ENCODE measurements at regions of chr12 and their contacts with region 1.

Region 1: DNA sequence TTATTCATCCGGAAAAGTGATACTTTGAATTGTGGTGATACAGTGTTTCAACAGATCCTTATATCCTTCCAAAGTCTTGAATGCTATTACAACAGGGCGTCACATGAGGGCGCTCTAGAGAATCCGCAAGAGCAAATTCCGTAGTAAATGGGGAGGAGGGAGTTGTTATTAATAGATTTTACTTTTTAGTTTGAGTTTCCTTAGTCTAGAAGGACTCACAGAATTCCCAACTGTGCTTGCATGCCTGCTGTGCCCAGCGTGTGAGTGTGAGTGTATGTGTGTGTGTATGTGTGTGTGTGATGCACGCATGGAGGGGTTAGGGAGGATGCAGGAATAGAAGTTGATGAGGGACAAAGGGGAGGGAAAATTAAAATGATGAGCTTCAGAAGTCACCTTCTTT is 375.3 kb downstream of the C12orf75 start:
- DNase-seq: peak in 5 of 10 donors; percentile 38 to 71 (median 48)
- H3K4me3 ChIP-seq: no peak overlapping the region
- H3K27ac ChIP-seq: peak overlapping the region in 29 of 59 donors; percentile 1 to 71 (median 33)
- H3K27me3 ChIP-seq: no peaks in the 10 kb centered on the region
- CTCF ChIP-seq: peak; percentile 56 to 90 (median 80)

Region 2: GRCh38 chr12:105409801-105410471 is 295.8 kb before region 1 on chr12:
- intact Hi-C with region 1: loop called in 1 of 2 experiments (anchors 10 kb)
- DNase-seq: no peak
- H3K4me3 ChIP-seq: peak overlapping the region in 3 of 59 donors; percentile 10 to 35 (median 17)
- H3K27ac ChIP-seq: no peak overlapping the region
- H3K27me3 ChIP-seq: peaks cover 0 to 6% (median 0%) of the 10 kb centered on the region in 45 donors
- CTCF ChIP-seq: no peak

Region 3: GRCh38 chr12:105538880-105539279 is 166.9 kb before region 1 on chr12:
- intact Hi-C with region 1: no loop called
- DNase-seq: no peak
- H3K4me3 ChIP-seq: no peak overlapping the region
- H3K27ac ChIP-seq: no peak overlapping the region
- H3K27me3 ChIP-seq: no peaks in the 10 kb centered on the region
- CTCF ChIP-seq: no peak

Region 4: GRCh38 chr12:105644770-105645169 is 61.0 kb before region 1 on chr12:
- intact Hi-C with region 1: no loop called
- DNase-seq: no peak
- H3K4me3 ChIP-seq: no peak overlapping the region
- H3K27ac ChIP-seq: no peak overlapping the region
- H3K27me3 ChIP-seq: peaks cover 0 to 3% (median 0%) of the 10 kb centered on the region in 45 donors
- CTCF ChIP-seq: no peak

Region 5: DNA sequence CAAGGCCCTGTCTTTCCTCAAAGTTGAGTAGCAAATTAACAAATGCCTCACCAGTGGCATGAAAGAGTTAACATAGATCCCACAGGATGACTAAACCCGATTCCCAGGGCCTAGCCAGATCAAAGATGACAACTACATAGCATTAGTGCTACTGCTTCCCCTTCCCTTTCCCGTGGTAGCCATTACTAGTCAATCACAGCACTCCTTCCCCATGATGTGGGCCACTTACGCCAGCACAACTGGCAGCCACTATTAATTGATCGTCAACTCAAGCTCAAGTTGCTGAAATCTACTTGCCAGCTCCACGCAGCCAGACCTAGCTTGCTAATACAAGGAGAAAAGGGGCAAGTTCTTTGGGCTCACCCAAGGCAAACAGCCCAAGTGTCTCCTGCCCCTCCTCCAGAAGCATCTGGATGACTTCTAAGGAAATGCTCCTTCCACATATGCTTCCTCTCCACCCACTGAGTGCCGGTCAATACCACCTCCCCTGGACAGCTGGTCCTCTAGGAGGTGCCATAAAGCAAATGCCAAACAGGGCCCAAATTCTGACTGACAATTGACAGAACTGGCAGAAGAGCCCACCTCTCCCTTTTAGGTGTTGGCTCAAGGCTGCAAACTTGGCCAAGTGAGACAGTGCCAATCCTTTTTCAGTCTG is 360.4 kb after region 1 on chr12:
- intact Hi-C with region 1: loop called in 1 of 2 experiments (anchors 10 kb)
- DNase-seq: no peak
- H3K4me3 ChIP-seq: no peak overlapping the region
- H3K27ac ChIP-seq: peak overlapping the region in 28 of 59 donors; percentile 0 to 63 (median 29)
- H3K27me3 ChIP-seq: no peaks in the 10 kb centered on the region
- CTCF ChIP-seq: no peak

Measured in dorsolateral prefrontal cortex (tissue), 120 donors.